B cell (primary cell): ENCODE measurements at regions of chr6 and their contacts with region 1.

Region 1: GRCh38 chr6:35240840-35241801 is 18.4 kb upstream of the ZNF76 start:
- DNase-seq: peak; percentile 73
- ATAC-seq: peak; percentile 82
- H3K4me3 ChIP-seq: no peak overlapping the region
- H3K4me3 Mint-ChIP-seq: no peak overlapping the region
- H3K27ac ChIP-seq: no peak overlapping the region
- H3K27ac Mint-ChIP-seq: no peak overlapping the region
- H3K4me1 ChIP-seq: no peaks in the 10 kb centered on the region
- H3K4me1 Mint-ChIP-seq: no peaks in the 10 kb centered on the region
- H3K27me3 ChIP-seq: no peaks in the 10 kb centered on the region
- H3K27me3 Mint-ChIP-seq: no peaks in the 10 kb centered on the region
- CTCF ChIP-seq: peak; percentile 100

Region 2: GRCh38 chr6:33744001-33744848 is 1496.9 kb before region 1 on chr6:
- CTCF ChIA-PET with region 1: no interaction called
- POLR2A ChIA-PET with region 1: no interaction called
- intact Hi-C with region 1: no loop called
- DNase-seq: peak; percentile 81
- ATAC-seq: peak; percentile 81
- H3K4me3 ChIP-seq: no peak overlapping the region
- H3K4me3 Mint-ChIP-seq: no peak overlapping the region
- H3K27ac ChIP-seq: no peak overlapping the region
- H3K27ac Mint-ChIP-seq: peak overlapping the region; percentile 23
- H3K4me1 ChIP-seq: peaks cover 0 to 3% of the 10 kb centered on the region in 2 donors
- H3K4me1 Mint-ChIP-seq: peaks cover 3% of the 10 kb centered on the region
- H3K27me3 ChIP-seq: peaks cover 0 to 9% (median under 1%) of the 10 kb centered on the region in 4 experiments
- H3K27me3 Mint-ChIP-seq: peaks cover 24% of the 10 kb centered on the region
- CTCF ChIP-seq: peak; percentile 86

Region 3: DNA sequence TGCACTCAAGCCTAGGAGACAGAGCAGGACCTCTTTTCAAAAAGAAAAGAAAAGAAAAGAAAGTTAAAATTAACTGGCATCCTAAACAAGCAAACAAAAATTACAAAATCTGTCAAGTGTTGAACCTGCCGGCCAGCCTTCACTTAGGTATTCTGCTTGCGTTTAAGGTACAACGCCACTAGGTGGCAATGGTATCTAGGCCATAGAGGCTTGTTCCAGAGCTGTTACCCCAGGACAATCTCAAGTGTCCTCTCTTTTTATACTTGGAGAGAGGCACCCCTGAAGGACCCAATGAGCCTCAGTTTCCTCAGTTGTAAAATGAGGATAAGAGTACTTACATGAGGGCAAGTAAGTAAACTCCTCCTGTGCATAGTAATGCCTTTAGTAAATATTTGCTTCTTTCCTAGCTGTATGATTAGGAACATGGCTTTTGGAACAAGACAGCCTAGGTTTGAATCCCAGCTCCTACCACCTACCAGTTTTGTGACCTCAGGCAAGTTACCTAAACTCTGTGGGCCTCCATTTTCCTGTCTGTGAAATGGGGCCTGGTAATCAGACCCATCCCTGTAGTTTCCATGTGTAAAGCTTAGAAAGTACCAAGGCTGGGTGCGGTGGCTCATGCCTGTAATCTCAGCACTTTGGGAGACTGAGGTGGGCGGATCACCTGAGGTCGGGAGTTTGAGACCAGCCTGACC is 781.1 kb before region 1 on chr6:
- CTCF ChIA-PET with region 1: interaction called, 13 read pairs
- POLR2A ChIA-PET with region 1: no interaction called
- intact Hi-C with region 1: no loop called
- DNase-seq: peak; percentile 66
- ATAC-seq: peak; percentile 81
- H3K4me3 ChIP-seq: no peak overlapping the region
- H3K4me3 Mint-ChIP-seq: no peak overlapping the region
- H3K27ac ChIP-seq: no peak overlapping the region
- H3K27ac Mint-ChIP-seq: no peak overlapping the region
- H3K4me1 ChIP-seq: peaks cover under 1% of the 10 kb centered on the region in 2 donors
- H3K4me1 Mint-ChIP-seq: peaks cover 3% of the 10 kb centered on the region
- H3K27me3 ChIP-seq: peaks cover 0 to 16% (median 4%) of the 10 kb centered on the region in 4 experiments
- H3K27me3 Mint-ChIP-seq: peaks cover 11% of the 10 kb centered on the region
- CTCF ChIP-seq: peak; percentile 80

Region 4: DNA sequence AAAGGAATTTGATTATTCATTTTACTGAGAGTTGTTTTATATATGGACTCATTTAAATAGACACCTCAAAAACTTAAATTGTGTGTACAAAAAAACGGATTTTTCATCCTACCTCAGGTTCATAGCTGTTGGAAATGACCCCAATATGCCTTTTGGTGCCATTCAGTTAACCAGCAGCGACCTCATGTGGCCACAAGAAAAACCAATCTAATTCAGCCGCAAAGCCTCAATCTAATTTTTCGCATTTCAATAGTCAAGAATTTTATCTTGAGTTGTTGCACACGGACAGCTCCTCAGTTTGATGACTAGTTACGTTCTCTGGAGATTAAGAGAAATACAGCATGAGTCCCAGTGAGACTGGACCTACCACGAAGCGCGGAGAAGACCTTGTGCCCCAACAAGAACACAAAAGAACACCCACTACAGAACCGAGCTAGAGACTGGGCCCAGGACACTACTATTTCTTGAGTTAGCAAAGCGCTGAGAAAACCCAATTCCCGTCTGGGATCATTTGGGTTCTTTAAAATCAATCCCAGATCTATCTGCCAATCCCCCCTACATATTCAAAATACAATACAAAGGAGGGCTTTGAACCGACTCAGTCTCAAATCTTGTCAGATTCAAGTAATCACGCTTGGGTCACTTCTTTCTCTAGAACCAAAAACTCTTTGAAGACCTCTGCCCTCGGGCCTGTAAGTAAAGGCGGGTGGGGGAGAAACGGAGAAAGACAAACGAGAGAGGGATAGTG is 101.0 kb before region 1 on chr6:
- CTCF ChIA-PET with region 1: interaction called, 4 read pairs
- POLR2A ChIA-PET with region 1: no interaction called
- intact Hi-C with region 1: loop called (anchors 2 kb)
- DNase-seq: peak; percentile 76
- ATAC-seq: no peak
- H3K4me3 ChIP-seq: no peak overlapping the region
- H3K4me3 Mint-ChIP-seq: peak overlapping the region; percentile 42
- H3K27ac ChIP-seq: no peak overlapping the region
- H3K27ac Mint-ChIP-seq: no peak overlapping the region
- H3K4me1 ChIP-seq: peaks cover 9 to 18% of the 10 kb centered on the region in 2 donors
- H3K4me1 Mint-ChIP-seq: peaks cover 18% of the 10 kb centered on the region
- H3K27me3 ChIP-seq: peaks cover 0 to 17% (median 8%) of the 10 kb centered on the region in 4 experiments
- H3K27me3 Mint-ChIP-seq: peaks cover 18% of the 10 kb centered on the region
- CTCF ChIP-seq: peak; percentile 94

Region 5: GRCh38 chr6:35224720-35225119 is 16.4 kb before region 1 on chr6:
- CTCF ChIA-PET with region 1: interaction called, 29 read pairs
- POLR2A ChIA-PET with region 1: no interaction called
- intact Hi-C with region 1: no loop called
- DNase-seq: no peak
- ATAC-seq: no peak
- H3K4me3 ChIP-seq: no peak overlapping the region
- H3K4me3 Mint-ChIP-seq: no peak overlapping the region
- H3K27ac ChIP-seq: no peak overlapping the region
- H3K27ac Mint-ChIP-seq: no peak overlapping the region
- H3K4me1 ChIP-seq: no peaks in the 10 kb centered on the region
- H3K4me1 Mint-ChIP-seq: no peaks in the 10 kb centered on the region
- H3K27me3 ChIP-seq: peaks cover 0 to 11% (median 0%) of the 10 kb centered on the region in 4 experiments
- H3K27me3 Mint-ChIP-seq: no peaks in the 10 kb centered on the region
- CTCF ChIP-seq: no peak

Region 6: DNA sequence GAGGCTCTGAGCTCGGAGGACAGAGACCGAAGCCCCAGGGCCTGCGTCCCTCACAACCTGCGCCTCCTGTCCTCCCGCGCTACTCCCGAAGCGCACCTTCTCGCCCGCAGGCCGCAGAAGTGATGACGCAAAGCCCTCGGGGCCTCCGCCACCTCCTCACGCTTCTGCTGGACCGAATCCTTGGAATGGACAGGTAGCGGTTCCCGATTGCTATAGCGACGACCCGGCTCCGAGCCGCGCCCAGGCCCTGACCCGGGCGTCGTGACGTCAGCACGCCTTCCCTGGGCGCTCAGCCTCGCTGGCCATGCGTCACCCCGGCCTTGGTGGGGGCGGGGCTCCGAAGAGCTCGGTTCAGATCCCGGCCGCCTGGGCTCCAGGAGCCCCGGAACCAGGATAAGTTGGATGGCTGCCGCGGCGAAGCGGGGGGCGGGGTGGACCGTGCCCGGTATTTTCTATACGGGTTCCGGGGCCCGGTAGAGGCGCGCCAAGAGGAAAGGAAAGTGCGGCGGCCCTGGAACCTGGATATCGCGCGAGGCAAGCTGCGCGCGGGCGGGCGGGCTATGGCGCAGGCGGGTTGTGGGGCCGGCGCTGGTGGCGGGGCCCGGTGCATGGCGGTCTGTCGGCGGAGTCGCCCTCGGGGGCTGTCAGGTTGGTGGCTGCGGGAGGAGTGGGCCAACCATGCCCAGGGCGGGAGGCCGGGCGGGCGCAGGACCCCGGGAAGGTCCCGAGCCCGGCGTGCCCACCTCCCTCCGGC is 18.2 kb after region 1 on chr6 and contains the start of gene ZNF76:
- CTCF ChIA-PET with region 1: interaction called, 30 read pairs
- POLR2A ChIA-PET with region 1: no interaction called
- intact Hi-C with region 1: no loop called
- DNase-seq: peak; percentile 97
- ATAC-seq: peak; percentile 81
- H3K4me3 ChIP-seq: peak within 1 kb of the TSS; percentile 63 to 90 (median 81)
- H3K4me3 Mint-ChIP-seq: peak within 1 kb of the TSS; percentile 99
- H3K27ac ChIP-seq: peak within 1 kb of the TSS; percentile 97 to 98
- H3K27ac Mint-ChIP-seq: peak within 1 kb of the TSS; percentile 98
- H3K4me1 ChIP-seq: peaks cover 21 to 30% of the 10 kb centered on the region in 2 donors
- H3K4me1 Mint-ChIP-seq: peaks cover 47% of the 10 kb centered on the region
- H3K27me3 ChIP-seq: no peaks in the 10 kb centered on the region
- H3K27me3 Mint-ChIP-seq: no peaks in the 10 kb centered on the region
- CTCF ChIP-seq: no peak
- total RNA-seq, gene ZNF76: 96.9 and 107 TPM in 2 replicates